Activated CD4-positive, alpha-beta T cell treated with anti-CD3 and anti-CD28 coated beads, Interleukin-2, amount 10 ng/mL, durations not matched to agents 24 days and 14 days (primary cell): ENCODE measurements at regions of chr2 and their contacts with region 1.

Region 1: GRCh38 chr2:157327621-157328500 is 2.2 kb upstream of the ERMN start:
- DNase-seq: peak; percentile 95
- H3K4me3 Mint-ChIP-seq: peak overlapping the region; percentile 32
- H3K27ac Mint-ChIP-seq: peak overlapping the region; percentile 34
- H3K4me1 Mint-ChIP-seq: peaks cover 37% of the 10 kb centered on the region
- H3K27me3 Mint-ChIP-seq: no peaks in the 10 kb centered on the region

Region 2: DNA sequence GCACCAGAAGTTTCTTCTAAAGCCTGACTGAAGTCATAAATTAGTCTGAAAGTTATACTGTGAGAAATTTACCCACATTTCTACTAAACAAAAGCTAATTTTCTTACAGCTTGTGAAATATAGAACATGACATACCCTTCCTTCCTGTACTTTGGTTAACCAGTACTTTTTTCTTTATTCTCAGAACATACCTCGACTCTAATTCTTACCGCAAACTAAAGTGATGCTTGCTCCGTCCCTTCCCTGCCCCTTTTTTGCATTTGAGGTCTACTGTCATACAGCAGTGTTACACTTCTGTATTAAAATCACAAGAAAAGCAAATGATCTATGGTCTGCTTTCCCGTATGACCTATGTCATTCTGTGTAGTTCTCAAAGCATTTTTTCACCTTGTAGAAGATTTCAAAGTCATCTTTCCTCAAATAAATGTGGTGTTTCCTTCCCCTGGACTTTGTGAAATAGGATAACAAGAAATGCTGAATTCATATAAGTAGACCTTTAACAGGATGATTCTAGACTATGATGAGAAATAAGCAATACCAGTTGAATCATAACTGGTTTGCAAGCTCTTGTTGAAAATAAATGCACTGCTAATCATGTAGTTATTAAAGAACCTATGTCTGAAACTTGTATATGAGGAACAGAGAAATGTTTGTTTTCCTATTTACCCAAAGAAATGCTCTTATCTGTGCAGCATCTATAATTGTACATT is 85.6 kb after region 1 on chr2:
- intact Hi-C with region 1: loop called (anchors 2 kb)
- DNase-seq: peak; percentile 88
- H3K4me3 Mint-ChIP-seq: peak overlapping the region; percentile 87
- H3K27ac Mint-ChIP-seq: peak overlapping the region; percentile 95
- H3K4me1 Mint-ChIP-seq: peaks cover 71% of the 10 kb centered on the region
- H3K27me3 Mint-ChIP-seq: no peaks in the 10 kb centered on the region

Region 3: GRCh38 chr2:157596992-157597681 is 269.3 kb after region 1 on chr2:
- intact Hi-C with region 1: loop called (anchors 1 kb)
- DNase-seq: peak; percentile 86
- H3K4me3 Mint-ChIP-seq: peak overlapping the region; percentile 73
- H3K27ac Mint-ChIP-seq: no peak overlapping the region
- H3K4me1 Mint-ChIP-seq: peaks cover 7% of the 10 kb centered on the region
- H3K27me3 Mint-ChIP-seq: peaks cover 35% of the 10 kb centered on the region